ENCODE measurements at regions of chr12 and their contacts with region 1.

Region 1: DNA sequence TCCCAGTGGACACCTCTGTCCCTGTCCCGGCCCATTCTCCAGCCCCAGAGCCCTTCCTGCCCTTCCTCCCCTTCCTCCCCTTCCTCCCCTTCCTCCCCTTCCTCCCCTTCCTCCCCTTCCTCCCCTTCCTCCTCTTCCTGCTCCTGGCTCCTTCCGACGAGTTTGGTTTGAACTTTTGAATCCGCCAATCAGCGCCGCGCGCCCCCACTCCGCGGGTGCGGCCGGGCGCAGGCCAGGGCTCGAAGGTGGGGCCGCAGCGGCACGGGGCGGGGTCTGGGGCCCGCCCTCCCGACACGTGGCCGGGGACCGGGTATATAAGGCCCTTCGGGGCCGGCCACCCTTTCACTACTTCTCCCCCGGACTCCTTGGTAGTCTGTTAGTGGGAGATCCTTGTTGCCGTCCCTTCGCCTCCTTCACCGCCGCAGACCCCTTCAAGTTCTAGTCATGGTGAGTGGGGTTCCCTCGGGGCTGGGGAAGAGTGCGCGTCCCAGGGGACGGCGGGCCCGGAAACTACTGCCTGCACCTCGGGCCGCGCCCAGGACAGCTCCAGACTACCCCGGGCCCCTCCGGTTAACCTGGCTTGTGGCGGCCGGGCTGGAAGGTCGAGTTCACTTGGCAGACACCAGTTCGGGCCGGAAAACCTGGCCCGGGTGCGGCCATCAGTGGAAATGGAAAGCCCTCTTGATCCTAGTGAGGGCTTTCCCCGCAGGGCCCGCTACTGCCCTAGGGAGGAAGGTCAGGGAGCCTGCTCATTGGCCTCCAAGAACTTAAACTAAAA is at the start of gene TUBA1C:
- DNase-seq: peak; percentile 62
- H3K4me3 ChIP-seq: peak within 1 kb of the TSS; percentile 92
- H3K27me3 ChIP-seq: no peaks in the 10 kb centered on the region
- CTCF ChIP-seq: no peak
- polyA plus RNA-seq, gene TUBA1C: 1,365 and 2,194 TPM in 2 replicates

Region 2: DNA sequence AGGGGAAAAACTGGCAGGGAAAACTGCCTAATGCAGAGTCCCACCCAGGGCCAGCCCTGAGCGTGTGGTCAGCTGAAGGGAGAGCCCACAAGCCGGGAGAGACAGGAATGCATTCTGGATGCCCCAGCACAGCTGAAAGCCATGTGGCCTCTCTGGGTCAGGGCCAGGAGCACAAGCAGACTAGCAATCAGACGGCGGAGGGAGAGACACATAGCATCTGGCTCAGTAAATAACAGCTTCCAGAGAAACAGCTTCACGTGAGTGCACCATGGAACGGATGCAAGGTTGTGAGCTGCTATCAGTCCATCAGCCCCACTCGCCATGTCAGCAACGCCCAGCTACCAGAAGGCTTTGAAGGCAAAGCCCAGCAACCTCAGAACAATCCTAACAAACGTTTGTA is 1329.7 kb before region 1 on chr12:
- CTCF ChIA-PET with region 1: no interaction called
- POLR2A ChIA-PET with region 1: interaction called, 10 read pairs
- DNase-seq: peak; percentile 83
- H3K4me3 ChIP-seq: no peak overlapping the region
- H3K27me3 ChIP-seq: peaks cover 6% of the 10 kb centered on the region
- CTCF ChIP-seq: no peak

Region 3: GRCh38 chr12:49244176-49244575 is 20.8 kb before region 1 on chr12:
- CTCF ChIA-PET with region 1: interaction called, 20 read pairs
- POLR2A ChIA-PET with region 1: interaction called, 4 read pairs
- DNase-seq: peak; percentile 73
- H3K4me3 ChIP-seq: no peak overlapping the region
- H3K27me3 ChIP-seq: no peaks in the 10 kb centered on the region
- CTCF ChIP-seq: no peak

Region 4: GRCh38 chr12:49673446-49674317 is 408.8 kb after region 1 on chr12:
- CTCF ChIA-PET with region 1: no interaction called
- POLR2A ChIA-PET with region 1: no interaction called
- DNase-seq: peak; percentile 73
- H3K4me3 ChIP-seq: no peak overlapping the region
- H3K27me3 ChIP-seq: no peaks in the 10 kb centered on the region
- CTCF ChIP-seq: peak; percentile 42

Measured in BJ (cell line).